A673 (cell line): ENCODE measurements at regions of chr1 and their contacts with region 1.

Region 1: DNA sequence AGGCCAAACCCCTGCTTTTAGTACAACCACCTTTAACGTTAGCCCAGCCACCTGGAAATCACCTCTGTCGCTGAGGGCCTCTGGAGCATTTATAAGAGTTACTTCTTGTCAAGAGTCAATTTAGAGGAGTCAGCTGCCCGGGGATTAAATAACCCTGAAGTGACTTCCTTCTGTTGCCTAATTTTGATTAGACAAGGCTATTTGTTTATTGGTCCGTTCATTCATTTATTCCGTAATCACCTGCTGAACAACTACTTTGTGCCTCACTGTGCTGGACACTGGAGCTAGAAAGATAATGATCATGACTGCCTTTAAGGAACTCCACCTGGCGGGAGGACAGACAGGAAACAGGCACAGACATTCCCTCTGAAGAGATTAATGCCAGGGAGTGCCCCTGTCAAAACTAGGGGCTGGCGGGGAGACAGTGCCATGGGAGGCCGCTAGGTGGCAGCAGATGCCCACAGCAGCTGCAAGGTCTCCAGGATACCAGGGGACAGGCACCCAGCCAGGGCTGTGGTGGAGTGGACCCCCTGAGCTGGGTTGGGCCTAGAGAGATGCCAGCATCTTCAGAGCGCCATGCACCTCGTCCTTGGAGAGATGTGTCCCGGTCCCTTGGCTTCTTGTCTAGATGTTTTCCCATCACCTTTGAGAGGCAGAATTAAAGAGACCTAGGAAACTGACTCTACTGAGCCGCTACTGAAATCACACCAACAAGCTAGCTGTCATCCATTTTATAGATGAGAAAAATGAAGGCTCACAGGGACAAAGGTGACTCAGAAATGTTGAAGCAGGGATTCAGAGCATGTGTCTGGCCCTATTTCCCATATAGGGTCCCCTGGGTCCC is 3.7 kb downstream of the REN start:
- DNase-seq: peak; percentile 85
- H3K4me3 ChIP-seq: no peak overlapping the region
- H3K27ac ChIP-seq: no peak overlapping the region
- H3K4me1 ChIP-seq: peaks cover 3% of the 10 kb centered on the region
- H3K27me3 ChIP-seq: no peaks in the 10 kb centered on the region
- CTCF ChIP-seq: peak; percentile 99

Region 2: DNA sequence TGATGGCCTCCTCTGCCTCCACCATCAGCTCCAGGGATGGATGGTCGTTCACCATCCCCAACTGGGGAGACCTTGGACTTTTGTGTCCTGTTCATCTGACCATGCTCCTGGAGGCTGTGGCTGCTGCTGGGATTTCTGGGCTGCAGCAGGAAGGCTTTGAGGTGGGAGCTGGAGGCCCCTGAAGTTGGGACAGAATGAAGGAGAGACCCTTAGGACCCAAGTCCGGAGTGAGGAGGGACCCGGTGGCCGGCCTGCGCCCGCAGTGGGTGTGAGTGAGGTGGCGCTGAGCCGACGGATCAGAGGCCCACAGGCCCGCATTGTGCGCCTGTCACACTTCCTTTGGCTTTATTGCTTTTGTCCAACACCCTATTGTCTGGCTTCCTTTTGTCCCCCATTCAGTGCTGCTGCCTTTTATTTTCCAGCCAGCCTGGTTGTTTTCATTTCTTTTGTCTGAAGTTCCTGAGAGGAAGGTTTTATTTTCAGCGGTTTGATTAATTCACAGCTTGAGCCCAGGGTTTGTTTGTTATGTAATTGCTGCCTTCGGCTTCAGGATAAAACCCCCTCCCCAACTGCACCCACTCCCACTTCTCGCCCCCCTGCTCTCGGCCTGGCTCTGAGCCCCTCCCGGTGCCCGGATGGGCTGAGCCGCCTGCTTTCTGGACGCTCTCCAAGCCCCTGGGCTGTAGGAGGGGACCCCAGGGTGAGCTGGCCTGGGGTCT is 53.9 kb before region 1 on chr1:
- CTCF ChIA-PET with region 1: no interaction called
- POLR2A ChIA-PET with region 1: no interaction called
- intact Hi-C with region 1: no loop called
- DNase-seq: peak; percentile 64
- H3K4me3 ChIP-seq: no peak overlapping the region
- H3K27ac ChIP-seq: peak overlapping the region; percentile 32
- H3K4me1 ChIP-seq: peaks cover 27% of the 10 kb centered on the region
- H3K27me3 ChIP-seq: no peaks in the 10 kb centered on the region
- CTCF ChIP-seq: no peak

Region 3: DNA sequence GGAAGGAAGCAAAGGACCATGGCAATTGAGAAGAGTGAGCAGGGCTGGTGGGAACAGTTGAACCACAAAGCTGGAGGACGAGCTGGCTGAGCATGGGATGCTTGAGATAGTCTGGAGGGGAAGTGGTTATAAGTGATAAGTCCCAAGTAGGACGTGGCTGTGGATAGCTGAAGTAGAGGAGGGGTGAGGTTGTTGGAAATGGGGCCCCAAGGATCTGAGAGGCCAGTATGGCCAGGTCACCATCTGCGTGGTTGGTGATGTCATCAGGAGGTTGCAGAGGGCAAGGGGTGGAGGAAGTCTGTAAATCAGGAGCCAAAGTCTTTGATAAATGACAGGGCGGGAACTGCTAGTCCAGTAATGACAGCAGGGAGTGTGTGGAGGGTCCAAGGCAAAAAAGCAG is 14.7 kb after region 1 on chr1:
- CTCF ChIA-PET with region 1: interaction called, 3 read pairs
- POLR2A ChIA-PET with region 1: interaction called, 14 read pairs
- intact Hi-C with region 1: no loop called
- DNase-seq: no peak
- H3K4me3 ChIP-seq: no peak overlapping the region
- H3K27ac ChIP-seq: no peak overlapping the region
- H3K4me1 ChIP-seq: no peaks in the 10 kb centered on the region
- H3K27me3 ChIP-seq: peaks cover 14% of the 10 kb centered on the region
- CTCF ChIP-seq: no peak

Region 4: GRCh38 chr1:204207136-204207616 is 44.7 kb after region 1 on chr1:
- CTCF ChIA-PET with region 1: interaction called, 11 read pairs
- POLR2A ChIA-PET with region 1: no interaction called
- intact Hi-C with region 1: loop called (anchors 1 kb)
- DNase-seq: peak; percentile 52
- H3K4me3 ChIP-seq: no peak overlapping the region
- H3K27ac ChIP-seq: no peak overlapping the region
- H3K4me1 ChIP-seq: no peaks in the 10 kb centered on the region
- H3K27me3 ChIP-seq: peaks cover 16% of the 10 kb centered on the region
- CTCF ChIP-seq: peak; percentile 94

Region 5: GRCh38 chr1:204363335-204364124 is 201.1 kb after region 1 on chr1:
- CTCF ChIA-PET with region 1: interaction called, 12 read pairs
- POLR2A ChIA-PET with region 1: no interaction called
- intact Hi-C with region 1: loop called (anchors 1 kb)
- DNase-seq: peak; percentile 83
- H3K4me3 ChIP-seq: peak overlapping the region; percentile 38
- H3K27ac ChIP-seq: no peak overlapping the region
- H3K4me1 ChIP-seq: peaks cover 7% of the 10 kb centered on the region
- H3K27me3 ChIP-seq: no peaks in the 10 kb centered on the region
- CTCF ChIP-seq: peak; percentile 98

Region 6: DNA sequence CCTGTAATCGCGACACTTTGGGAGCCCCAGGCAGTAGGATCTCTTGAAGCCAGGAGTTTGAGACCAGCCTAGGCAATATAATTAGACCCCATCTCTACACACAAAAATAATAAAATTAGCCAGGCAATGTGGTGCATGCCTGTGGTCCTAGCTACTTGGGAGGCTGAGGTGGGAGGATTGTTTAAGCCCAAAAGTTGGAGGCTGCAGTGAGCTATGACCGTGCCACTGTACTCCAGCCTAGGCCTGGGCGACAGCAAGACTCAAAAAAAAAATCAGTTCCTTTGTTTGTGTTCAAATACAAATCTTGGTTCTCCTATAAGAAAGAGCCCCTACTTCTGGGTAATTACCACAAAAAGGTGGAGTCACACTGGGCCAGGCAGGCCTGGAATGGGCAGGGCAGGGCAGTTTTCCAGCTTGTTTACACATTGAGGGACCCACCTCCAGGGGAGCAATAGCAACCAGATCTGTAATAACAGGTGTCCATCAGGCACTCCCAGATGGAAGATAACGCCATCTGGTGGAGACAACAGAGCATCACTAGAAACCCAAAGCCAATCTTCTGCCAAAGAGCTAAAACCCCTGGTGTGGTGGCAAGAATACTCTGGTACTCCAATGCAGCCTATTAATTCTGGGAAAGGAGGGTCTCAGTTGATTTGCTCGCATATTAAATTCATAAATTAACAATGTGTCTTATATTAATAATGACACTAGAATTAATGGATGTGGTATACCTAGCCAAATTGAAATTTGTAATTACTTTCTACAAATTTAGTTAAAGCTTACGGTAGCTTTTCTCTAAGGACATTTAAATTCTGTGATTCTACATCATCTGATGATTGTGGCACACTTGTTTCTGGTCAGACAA is 236.0 kb after region 1 on chr1:
- CTCF ChIA-PET with region 1: interaction called, 10 read pairs
- POLR2A ChIA-PET with region 1: no interaction called
- intact Hi-C with region 1: no loop called
- DNase-seq: peak; percentile 90
- H3K4me3 ChIP-seq: no peak overlapping the region
- H3K27ac ChIP-seq: no peak overlapping the region
- H3K4me1 ChIP-seq: no peaks in the 10 kb centered on the region
- H3K27me3 ChIP-seq: no peaks in the 10 kb centered on the region
- CTCF ChIP-seq: peak; percentile 92

Region 7: GRCh38 chr1:204499521-204500468 is 337.3 kb after region 1 on chr1:
- CTCF ChIA-PET with region 1: no interaction called
- POLR2A ChIA-PET with region 1: no interaction called
- intact Hi-C with region 1: loop called (anchors 2 kb)
- DNase-seq: no peak
- H3K4me3 ChIP-seq: no peak overlapping the region
- H3K27ac ChIP-seq: no peak overlapping the region
- H3K4me1 ChIP-seq: peaks cover 26% of the 10 kb centered on the region
- H3K27me3 ChIP-seq: no peaks in the 10 kb centered on the region
- CTCF ChIP-seq: no peak